Motor neuron (in vitro differentiated cells): ENCODE measurements at regions of chr2 and their contacts with region 1.

Region 1: DNA sequence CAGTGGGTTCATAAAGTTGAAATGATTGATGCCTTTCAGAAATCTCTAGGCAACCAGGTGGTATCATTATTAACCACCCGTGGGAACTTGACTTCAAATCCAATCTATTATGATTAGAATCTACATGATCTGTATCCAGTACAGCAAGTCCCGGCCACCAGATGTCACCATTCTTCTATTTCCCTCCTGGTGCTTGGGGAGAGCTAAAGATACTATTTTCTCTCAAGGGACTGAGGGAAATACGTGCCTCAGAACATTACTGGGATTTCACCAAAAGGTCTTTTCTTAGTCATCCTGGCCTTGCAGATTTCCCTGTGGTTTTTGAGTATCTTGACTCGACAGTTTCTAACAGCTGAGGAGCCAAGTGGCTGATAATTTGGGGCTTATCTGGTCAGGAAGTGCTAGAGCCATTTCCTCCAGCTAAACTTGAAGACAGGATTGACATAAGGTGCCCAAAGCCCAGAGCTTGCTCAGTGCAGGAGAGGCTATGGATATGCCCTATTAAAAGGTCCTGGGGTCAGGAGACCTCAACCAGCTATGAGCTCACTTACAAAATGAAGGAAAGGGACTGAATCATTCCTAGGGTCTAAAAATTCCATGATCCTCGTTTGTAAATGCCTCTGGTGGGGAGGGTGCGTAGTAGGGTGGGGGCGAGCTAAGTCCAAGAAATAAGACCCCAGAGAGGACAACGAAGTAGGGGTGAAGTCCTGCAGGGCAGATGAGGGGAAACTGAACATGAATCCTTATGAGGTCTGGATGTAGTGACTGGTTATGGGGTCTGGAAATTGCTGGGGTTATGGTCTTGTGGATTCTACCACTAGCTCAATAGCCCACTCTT is 135.4 kb upstream of the MGAT5 start:
- ATAC-seq: peak; percentile 19 to 39 (median 36)
- H3K4me3 ChIP-seq: no peak overlapping the region
- H3K27ac ChIP-seq: no peak overlapping the region
- H3K4me1 ChIP-seq: peaks cover 14 to 22% of the 10 kb centered on the region in 2 donors

Region 2: DNA sequence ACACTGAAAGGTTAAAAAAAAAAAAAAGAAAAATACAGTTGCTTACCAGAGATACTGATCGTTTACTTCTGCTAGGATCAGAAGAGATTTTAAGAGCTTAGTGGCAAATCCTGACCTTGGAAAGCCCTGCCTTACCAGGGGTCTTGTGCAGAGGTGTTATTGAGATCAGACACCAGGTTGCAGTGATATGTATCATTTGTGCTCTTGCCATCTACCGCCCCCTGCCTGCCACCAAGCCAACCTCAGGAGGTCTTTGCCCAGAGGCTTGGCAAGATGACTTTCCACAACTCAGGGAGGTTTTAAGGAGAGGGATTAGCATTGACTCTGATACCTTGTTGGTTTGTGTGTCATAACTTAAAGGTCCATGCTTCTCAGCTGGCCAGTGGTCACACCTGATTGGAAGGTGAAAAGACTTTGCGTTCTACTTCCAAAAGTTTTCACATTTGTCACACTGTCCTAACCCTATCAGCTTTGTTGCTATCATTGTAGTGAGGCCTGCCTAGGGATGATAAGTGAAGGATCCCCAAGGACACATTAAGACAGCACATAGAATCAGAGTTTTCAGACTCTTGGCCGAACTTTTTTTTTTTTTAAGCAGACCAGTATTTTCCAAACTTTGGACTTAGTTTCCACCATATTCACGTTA is 89.2 kb after region 1 on chr2:
- in situ Hi-C with region 1: loop called in 1 of 9 experiments (anchors 25 kb)
- ATAC-seq: peak in 5 of 8 experiments; percentile 33 to 87 (median 82)
- H3K4me3 ChIP-seq: no peak overlapping the region
- H3K27ac ChIP-seq: no peak overlapping the region
- H3K4me1 ChIP-seq: peaks cover 11 to 14% of the 10 kb centered on the region in 2 donors

Region 3: GRCh38 chr2:134411828-134412638 is 293.5 kb after region 1 on chr2:
- in situ Hi-C with region 1: loop called in 7 of 9 experiments (anchors 10 to 25 kb)
- ATAC-seq: peak; percentile 80 to 99 (median 96)
- H3K4me3 ChIP-seq: no peak overlapping the region
- H3K27ac ChIP-seq: peak overlapping the region in 1 of 2 donors; percentile 36
- H3K4me1 ChIP-seq: peaks cover 9 to 10% of the 10 kb centered on the region in 2 donors

Region 4: GRCh38 chr2:134460583-134460998 is 342.1 kb after region 1 on chr2:
- in situ Hi-C with region 1: loop called in 1 of 9 experiments (anchors 25 kb)
- ATAC-seq: peak; percentile 59 to 92 (median 84)
- H3K4me3 ChIP-seq: no peak overlapping the region
- H3K27ac ChIP-seq: no peak overlapping the region
- H3K4me1 ChIP-seq: peaks cover 8 to 17% of the 10 kb centered on the region in 2 donors